AG04449 (cell line): ENCODE measurements at regions of chr19 and their contacts with region 1.

Region 1: DNA sequence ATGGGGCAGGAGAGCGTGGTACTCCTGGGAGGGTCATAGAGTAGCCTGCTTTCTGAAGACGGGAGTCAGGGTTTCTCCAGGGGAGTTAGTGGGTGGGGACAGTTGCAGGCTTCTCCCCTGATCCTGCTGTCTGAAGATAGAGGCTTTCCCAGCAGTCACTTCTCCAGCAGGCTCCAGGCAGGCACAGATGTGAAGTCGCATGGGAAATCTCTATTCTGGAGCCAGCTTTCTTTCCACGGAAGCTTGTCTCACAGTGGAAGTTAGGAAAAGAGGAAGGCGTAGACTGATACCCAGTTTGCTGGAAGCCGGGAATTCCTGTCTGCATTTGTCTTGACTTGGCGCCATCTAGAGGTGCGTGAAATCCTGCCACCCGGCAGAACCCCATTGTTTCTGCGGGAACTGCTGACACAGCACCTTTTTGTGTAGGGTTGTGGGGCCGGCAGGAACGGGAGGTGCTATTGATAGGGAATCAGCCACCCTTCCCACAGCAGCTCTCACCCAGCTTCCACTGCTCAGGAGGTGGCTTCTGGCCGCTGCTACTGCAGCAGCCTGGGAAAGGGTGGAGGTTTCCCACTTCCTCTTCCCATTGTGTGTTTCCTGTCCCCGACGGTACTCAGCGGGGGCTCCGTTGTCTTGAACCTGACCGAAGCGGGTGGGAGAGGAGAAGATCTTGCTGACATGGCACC is 28.5 kb upstream of the NPAS1 start:
- DNase-seq: no peak
- H3K4me3 ChIP-seq: no peak overlapping the region
- CTCF ChIP-seq: peak; percentile 80

Region 2: GRCh38 chr19:46753420-46754155 is 237.5 kb before region 1 on chr19:
- CTCF ChIA-PET with region 1: interaction called, 17 read pairs
- POLR2A ChIA-PET with region 1: no interaction called
- DNase-seq: no peak
- H3K4me3 ChIP-seq: no peak overlapping the region
- CTCF ChIP-seq: peak; percentile 42

Region 3: GRCh38 chr19:46860125-46860845 is 130.8 kb before region 1 on chr19:
- CTCF ChIA-PET with region 1: interaction called, 138 read pairs
- POLR2A ChIA-PET with region 1: interaction called, 4 read pairs
- DNase-seq: peak; percentile 90
- H3K4me3 ChIP-seq: peak overlapping the region; percentile 90
- CTCF ChIP-seq: no peak

Region 4: GRCh38 chr19:46886546-46887239 is 104.4 kb before region 1 on chr19:
- CTCF ChIA-PET with region 1: interaction called, 17 read pairs
- POLR2A ChIA-PET with region 1: interaction called, 4 read pairs
- DNase-seq: no peak
- H3K4me3 ChIP-seq: no peak overlapping the region
- CTCF ChIP-seq: no peak

Region 5: GRCh38 chr19:46954993-46955812 is 35.9 kb before region 1 on chr19:
- CTCF ChIA-PET with region 1: interaction called, 11 read pairs
- POLR2A ChIA-PET with region 1: no interaction called
- DNase-seq: no peak
- H3K4me3 ChIP-seq: no peak overlapping the region
- CTCF ChIP-seq: no peak

Region 6: GRCh38 chr19:47013041-47013517 is 21.9 kb after region 1 on chr19:
- CTCF ChIA-PET with region 1: interaction called, 66 read pairs
- POLR2A ChIA-PET with region 1: no interaction called
- DNase-seq: no peak
- H3K4me3 ChIP-seq: no peak overlapping the region
- CTCF ChIP-seq: peak; percentile 97